Activated CD8-positive, alpha-beta T cell treated with anti-CD3 and anti-CD28 coated beads, Interleukin-2, amount 10 ng/mL, durations not matched to agents 7 days and 5 days (primary cell): ENCODE measurements at regions of chr6 and their contacts with region 1.

Region 1: DNA sequence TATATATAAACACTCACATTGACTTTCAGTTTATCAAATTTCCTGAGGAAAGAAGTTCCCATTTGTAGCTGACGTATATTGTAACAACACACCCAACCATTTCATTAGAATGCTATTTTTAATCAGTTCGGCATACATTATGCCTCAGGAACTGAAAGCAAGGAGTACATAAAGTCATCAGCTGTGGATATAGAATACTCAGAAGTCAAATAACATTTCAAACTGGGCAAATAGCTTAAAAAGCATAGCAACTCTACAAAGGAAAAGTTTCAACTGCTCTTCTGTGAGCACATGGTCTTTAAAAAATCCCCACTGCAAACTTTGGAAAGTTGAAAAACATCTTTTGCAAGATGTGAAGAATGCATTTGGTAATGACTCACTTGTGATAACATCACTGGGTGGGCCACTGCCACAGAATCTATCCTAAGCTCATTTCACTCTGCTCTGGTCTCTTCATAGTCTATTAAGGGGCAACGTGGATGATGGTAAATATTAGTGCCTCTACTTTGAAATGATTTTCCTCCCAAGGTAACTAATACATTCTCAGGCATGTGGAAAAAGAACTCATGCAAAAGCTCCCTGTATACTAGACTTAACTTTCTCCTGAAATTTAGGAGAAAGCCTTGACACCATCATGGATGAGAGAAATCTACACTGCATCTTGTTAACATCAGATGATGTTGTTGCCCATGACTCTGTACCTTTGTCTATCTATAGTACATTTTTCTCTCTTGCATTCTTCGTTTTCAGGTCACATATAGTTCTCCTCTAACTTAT is 49.2 kb downstream of the FYN start:
- DNase-seq: no peak
- ATAC-seq: peak; percentile 72
- H3K4me3 Mint-ChIP-seq: peak overlapping the region; percentile 53
- H3K27ac Mint-ChIP-seq: peak overlapping the region; percentile 73
- H3K4me1 Mint-ChIP-seq: peaks cover 67% of the 10 kb centered on the region
- H3K27me3 Mint-ChIP-seq: no peaks in the 10 kb centered on the region

Region 2: DNA sequence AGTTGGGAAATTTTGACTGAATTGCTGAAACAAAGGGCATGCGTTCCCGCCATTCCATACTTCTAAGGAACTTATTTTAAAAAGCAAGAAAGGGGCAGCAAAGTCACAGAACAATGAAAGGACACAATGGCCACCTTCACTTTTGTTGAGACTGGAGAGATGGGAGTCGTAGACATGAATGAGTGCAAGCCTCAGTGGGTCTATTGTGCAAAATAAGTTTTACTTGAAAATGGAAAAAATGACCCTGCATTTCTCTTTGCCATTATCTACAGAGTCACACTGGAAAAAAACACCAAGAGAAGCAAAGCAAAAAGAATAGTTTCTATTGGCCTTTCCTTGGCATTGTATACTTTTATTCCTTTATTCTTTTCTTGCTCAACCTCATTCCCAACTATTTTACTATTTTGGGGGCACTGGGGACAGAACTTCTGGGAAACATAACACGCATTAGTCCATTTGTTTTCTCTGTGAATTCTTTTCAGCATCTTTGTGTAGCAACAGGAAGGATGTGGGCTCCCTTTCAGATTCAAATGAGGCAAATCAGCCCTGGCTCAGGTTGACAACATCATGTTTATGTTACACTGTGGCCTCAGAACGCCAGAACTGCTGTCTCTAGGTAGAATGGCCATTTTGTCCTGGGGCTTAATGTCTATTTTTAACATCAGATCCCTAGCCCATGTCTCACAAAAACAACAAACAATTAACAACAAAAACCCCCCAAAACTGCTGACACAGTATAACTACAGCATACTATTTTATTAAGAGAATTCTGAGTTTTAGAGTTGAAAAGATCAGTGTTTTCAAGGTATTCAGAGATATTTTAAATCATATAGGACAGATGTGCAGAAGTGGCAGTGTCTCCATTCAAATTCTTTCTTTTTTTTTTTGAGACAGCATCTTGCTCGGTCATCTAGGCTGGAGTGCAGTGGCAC is 73.0 kb before region 1 on chr6:
- CTCF ChIA-PET with region 1: interaction called, 14 read pairs
- POLR2A ChIA-PET with region 1: interaction called, 3 read pairs
- DNase-seq: peak; percentile 84
- ATAC-seq: peak; percentile 92
- H3K4me3 Mint-ChIP-seq: peak overlapping the region; percentile 63
- H3K27ac Mint-ChIP-seq: peak overlapping the region; percentile 93
- H3K4me1 Mint-ChIP-seq: peaks cover 92% of the 10 kb centered on the region
- H3K27me3 Mint-ChIP-seq: no peaks in the 10 kb centered on the region

Region 3: GRCh38 chr6:111804627-111805235 is 19.3 kb before region 1 on chr6:
- CTCF ChIA-PET with region 1: interaction called, 25 read pairs
- POLR2A ChIA-PET with region 1: interaction called, 10 read pairs
- DNase-seq: peak; percentile 89
- ATAC-seq: peak; percentile 78
- H3K4me3 Mint-ChIP-seq: peak overlapping the region; percentile 56
- H3K27ac Mint-ChIP-seq: peak overlapping the region; percentile 99
- H3K4me1 Mint-ChIP-seq: peaks cover 90% of the 10 kb centered on the region
- H3K27me3 Mint-ChIP-seq: no peaks in the 10 kb centered on the region

Region 4: GRCh38 chr6:111812060-111813038 is 11.7 kb before region 1 on chr6:
- CTCF ChIA-PET with region 1: interaction called, 58 read pairs
- POLR2A ChIA-PET with region 1: interaction called, 14 read pairs
- DNase-seq: no peak
- ATAC-seq: peak; percentile 20
- H3K4me3 Mint-ChIP-seq: peak overlapping the region; percentile 36
- H3K27ac Mint-ChIP-seq: peak overlapping the region; percentile 85
- H3K4me1 Mint-ChIP-seq: peaks cover 81% of the 10 kb centered on the region
- H3K27me3 Mint-ChIP-seq: no peaks in the 10 kb centered on the region